ENCODE measurements at regions of chr2 and their contacts with region 1.

Region 1: GRCh38 chr2:9555297-9556141 is at the start of gene ADAM17:
- DNase-seq: peak; percentile 92
- ATAC-seq: peak; percentile 90
- H3K4me3 Mint-ChIP-seq: peak within 1 kb of the TSS; percentile 96
- H3K27ac Mint-ChIP-seq: peak within 1 kb of the TSS; percentile 98
- H3K4me1 Mint-ChIP-seq: peaks cover 54% of the 10 kb centered on the region
- H3K27me3 Mint-ChIP-seq: no peaks in the 10 kb centered on the region
- CTCF ChIP-seq: no peak
- total RNA-seq, gene ADAM17: 34.3 and 39.5 TPM in 2 replicates

Region 2: GRCh38 chr2:9174771-9175437 is 380.6 kb before region 1 on chr2:
- CTCF ChIA-PET with region 1: no interaction called
- POLR2A ChIA-PET with region 1: no interaction called
- intact Hi-C with region 1: no loop called
- DNase-seq: no peak
- ATAC-seq: no peak
- H3K4me3 Mint-ChIP-seq: no peak overlapping the region
- H3K27ac Mint-ChIP-seq: no peak overlapping the region
- H3K4me1 Mint-ChIP-seq: peaks cover 4% of the 10 kb centered on the region
- H3K27me3 Mint-ChIP-seq: peaks cover 7% of the 10 kb centered on the region
- CTCF ChIP-seq: no peak

Region 3: DNA sequence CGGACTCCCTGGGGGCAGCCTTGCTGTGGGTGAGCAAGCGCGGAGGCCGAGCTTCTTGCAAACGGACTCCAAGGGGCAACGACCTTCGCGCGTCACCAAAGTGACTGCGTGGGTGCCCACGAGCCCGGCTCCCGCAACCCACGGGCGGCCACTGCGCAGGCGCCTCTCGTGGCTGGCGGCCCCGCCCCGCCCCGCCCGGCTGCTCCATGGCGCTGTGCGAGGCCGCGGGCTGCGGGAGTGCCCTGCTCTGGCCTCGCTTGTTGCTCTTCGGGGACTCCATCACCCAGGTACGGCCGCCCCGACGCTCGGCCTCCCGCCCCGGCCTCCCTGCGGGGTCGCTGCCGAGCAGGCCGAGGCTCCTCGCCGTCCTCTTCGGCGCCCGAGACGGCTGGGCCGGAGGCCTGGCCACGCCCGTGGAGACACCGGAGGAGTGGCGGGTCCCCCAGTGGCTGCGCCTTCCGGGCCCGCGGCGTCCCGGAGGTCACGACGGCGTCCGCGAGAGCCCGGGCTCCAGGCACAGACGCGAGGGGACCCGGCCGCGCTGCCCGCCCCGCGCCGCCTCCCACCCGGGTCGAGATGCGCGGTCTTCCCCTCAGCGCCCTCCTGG is 81.1 kb before region 1 on chr2 and contains the start of gene IAH1:
- CTCF ChIA-PET with region 1: interaction called, 3 read pairs
- POLR2A ChIA-PET with region 1: interaction called, 31 read pairs
- intact Hi-C with region 1: loop called (anchors 2 kb)
- DNase-seq: peak; percentile 69
- ATAC-seq: peak; percentile 82
- H3K4me3 Mint-ChIP-seq: peak within 1 kb of the TSS; percentile 80
- H3K27ac Mint-ChIP-seq: peak within 1 kb of the TSS; percentile 61
- H3K4me1 Mint-ChIP-seq: peaks cover 39% of the 10 kb centered on the region
- H3K27me3 Mint-ChIP-seq: no peaks in the 10 kb centered on the region
- CTCF ChIP-seq: no peak
- total RNA-seq, gene IAH1: 47.1 and 49.0 TPM in 2 replicates

Region 4: DNA sequence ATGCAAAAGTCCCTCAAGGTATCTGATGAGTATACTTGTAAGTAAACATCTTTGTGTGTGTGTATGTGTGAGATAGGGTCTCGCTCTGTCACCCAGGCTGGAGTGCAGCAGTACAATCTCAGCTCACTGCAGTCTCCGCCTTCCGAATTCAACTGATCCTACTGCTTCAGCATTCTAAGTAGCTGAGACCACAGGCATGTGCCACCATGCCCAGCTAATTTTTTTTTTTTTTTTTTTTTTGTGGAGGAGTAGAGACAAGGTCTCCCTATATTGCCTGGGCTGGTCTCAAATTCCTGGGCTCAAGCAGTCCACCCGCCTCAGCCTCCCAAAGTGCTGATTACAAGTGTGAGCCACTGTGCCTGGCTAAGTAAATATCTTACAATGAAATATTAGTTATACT is 23.1 kb before region 1 on chr2:
- CTCF ChIA-PET with region 1: interaction called, 17 read pairs
- POLR2A ChIA-PET with region 1: interaction called, 23 read pairs
- intact Hi-C with region 1: no loop called
- DNase-seq: no peak
- ATAC-seq: no peak
- H3K4me3 Mint-ChIP-seq: no peak overlapping the region
- H3K27ac Mint-ChIP-seq: no peak overlapping the region
- H3K4me1 Mint-ChIP-seq: peaks cover 25% of the 10 kb centered on the region
- H3K27me3 Mint-ChIP-seq: no peaks in the 10 kb centered on the region
- CTCF ChIP-seq: no peak

Region 5: GRCh38 chr2:9594366-9595054 is 39.0 kb after region 1 on chr2:
- CTCF ChIA-PET with region 1: interaction called, 3 read pairs
- POLR2A ChIA-PET with region 1: interaction called, 4 read pairs
- intact Hi-C with region 1: loop called (anchors 5 kb)
- DNase-seq: no peak
- ATAC-seq: no peak
- H3K4me3 Mint-ChIP-seq: no peak overlapping the region
- H3K27ac Mint-ChIP-seq: peak overlapping the region; percentile 4
- H3K4me1 Mint-ChIP-seq: peaks cover 32% of the 10 kb centered on the region
- H3K27me3 Mint-ChIP-seq: no peaks in the 10 kb centered on the region
- CTCF ChIP-seq: no peak

Region 6: GRCh38 chr2:9843229-9844035 is 287.9 kb after region 1 on chr2 and contains the start of gene TAF1B:
- CTCF ChIA-PET with region 1: no interaction called
- POLR2A ChIA-PET with region 1: interaction called, 4 read pairs
- intact Hi-C with region 1: loop called (anchors 2 kb)
- DNase-seq: peak; percentile 86
- ATAC-seq: peak; percentile 87
- H3K4me3 Mint-ChIP-seq: peak within 1 kb of the TSS; percentile 94
- H3K27ac Mint-ChIP-seq: peak within 1 kb of the TSS; percentile 91
- H3K4me1 Mint-ChIP-seq: peaks cover 34% of the 10 kb centered on the region
- H3K27me3 Mint-ChIP-seq: no peaks in the 10 kb centered on the region
- CTCF ChIP-seq: no peak
- total RNA-seq, gene TAF1B: 26.4 and 28.7 TPM in 2 replicates

Region 7: DNA sequence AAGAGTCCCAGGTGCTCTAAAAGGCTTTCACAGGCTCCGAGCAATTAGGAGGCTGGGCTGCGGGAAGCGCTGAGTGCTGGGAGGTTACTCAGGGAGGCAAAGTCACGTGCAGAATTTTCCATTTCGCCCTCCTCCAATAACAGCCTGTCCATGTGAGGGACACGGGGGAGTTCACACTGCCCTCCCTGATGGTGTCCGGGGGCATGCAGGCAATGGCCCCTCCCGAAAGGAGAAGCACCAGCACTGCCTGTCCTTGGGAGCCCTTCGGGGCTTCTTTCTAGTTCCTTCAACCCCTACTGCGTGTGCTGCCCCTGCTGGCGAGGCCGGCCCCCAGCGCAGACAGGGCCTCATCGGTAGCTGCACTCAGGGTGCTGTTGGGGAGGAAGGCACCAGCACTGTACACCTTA is 684.0 kb after region 1 on chr2:
- CTCF ChIA-PET with region 1: no interaction called
- POLR2A ChIA-PET with region 1: no interaction called
- intact Hi-C with region 1: no loop called
- DNase-seq: no peak
- ATAC-seq: no peak
- H3K4me3 Mint-ChIP-seq: no peak overlapping the region
- H3K27ac Mint-ChIP-seq: no peak overlapping the region
- H3K4me1 Mint-ChIP-seq: no peaks in the 10 kb centered on the region
- H3K27me3 Mint-ChIP-seq: peaks cover 9% of the 10 kb centered on the region
- CTCF ChIP-seq: no peak

Measured in activated B cell treated with CpG ODN at 0.5 μM for 24 hours (primary cell).